HepG2 (cell line): ENCODE measurements at regions of chr6 and their contacts with region 1.

Region 1: GRCh38 chr6:32952817-32953739 is at the start of gene HLA-DMA:
- DNase-seq: peak; percentile 85
- ATAC-seq: peak; percentile 92
- H3K4me3 ChIP-seq: no peak within 1 kb of the TSS
- H3K27ac ChIP-seq: no peak within 1 kb of the TSS
- H3K4me1 ChIP-seq: peaks cover 12% of the 10 kb centered on the region
- H3K27me3 ChIP-seq: peaks cover 1 to 13% of the 10 kb centered on the region in 2 experiments; a peak in 2 of 5 replicates
- CTCF ChIP-seq: peak; percentile 82
- EP300 ChIP-seq: no peak
- POLR2A ChIP-seq: no peak
- RAD21 ChIP-seq: peak; percentile 62
- total RNA-seq, gene HLA-DMA: 0.71 and 1.3 TPM in 2 replicates

Region 2: GRCh38 chr6:32785781-32786533 is 167.1 kb before region 1 on chr6:
- CTCF ChIA-PET with region 1: no interaction called
- POLR2A ChIA-PET with region 1: no interaction called
- in situ Hi-C with region 1: no loop called
- intact Hi-C with region 1: no loop called
- DNase-seq: peak; percentile 44
- ATAC-seq: peak; percentile 86
- H3K4me3 ChIP-seq: no peak overlapping the region
- H3K27ac ChIP-seq: no peak overlapping the region
- H3K4me1 ChIP-seq: peaks cover 7% of the 10 kb centered on the region; the same call in 1 of the 2 replicates
- H3K27me3 ChIP-seq: no peaks in the 10 kb centered on the region; a peak in 1 of 5 replicates
- CTCF ChIP-seq: peak; percentile 80
- EP300 ChIP-seq: no peak
- POLR2A ChIP-seq: no peak
- RAD21 ChIP-seq: peak; percentile 39; the same call in 1 of the 2 replicates

Region 3: GRCh38 chr6:32838114-32838958 is 114.7 kb before region 1 on chr6 and contains the start of gene TAP2:
- CTCF ChIA-PET with region 1: no interaction called
- POLR2A ChIA-PET with region 1: interaction called, 4 read pairs
- in situ Hi-C with region 1: no loop called
- intact Hi-C with region 1: loop called (anchors 1 kb)
- DNase-seq: peak; percentile 89
- ATAC-seq: peak; percentile 97
- H3K4me3 ChIP-seq: peak within 1 kb of the TSS; percentile 82 to 87 (median 86)
- H3K27ac ChIP-seq: peak within 1 kb of the TSS; percentile 80
- H3K4me1 ChIP-seq: peaks cover 24% of the 10 kb centered on the region
- H3K27me3 ChIP-seq: no peaks in the 10 kb centered on the region
- CTCF ChIP-seq: peak; percentile 99
- EP300 ChIP-seq: no peak
- POLR2A ChIP-seq: peak; percentile 60 to 73
- RAD21 ChIP-seq: peak; percentile 99
- total RNA-seq, gene TAP2: 9.8 and 17.6 TPM in 2 replicates

Region 4: GRCh38 chr6:32885698-32886286 is 67.3 kb before region 1 on chr6:
- CTCF ChIA-PET with region 1: interaction called, 31 read pairs
- POLR2A ChIA-PET with region 1: no interaction called
- in situ Hi-C with region 1: loop called (anchors 5 kb)
- intact Hi-C with region 1: no loop called
- DNase-seq: peak; percentile 77
- ATAC-seq: peak; percentile 67
- H3K4me3 ChIP-seq: no peak overlapping the region
- H3K27ac ChIP-seq: no peak overlapping the region
- H3K4me1 ChIP-seq: no peaks in the 10 kb centered on the region
- H3K27me3 ChIP-seq: peaks cover 0 to 36% of the 10 kb centered on the region in 2 experiments; a peak in 2 of 5 replicates
- CTCF ChIP-seq: peak; percentile 68
- EP300 ChIP-seq: no peak
- POLR2A ChIP-seq: no peak
- RAD21 ChIP-seq: peak; percentile 67

Region 5: DNA sequence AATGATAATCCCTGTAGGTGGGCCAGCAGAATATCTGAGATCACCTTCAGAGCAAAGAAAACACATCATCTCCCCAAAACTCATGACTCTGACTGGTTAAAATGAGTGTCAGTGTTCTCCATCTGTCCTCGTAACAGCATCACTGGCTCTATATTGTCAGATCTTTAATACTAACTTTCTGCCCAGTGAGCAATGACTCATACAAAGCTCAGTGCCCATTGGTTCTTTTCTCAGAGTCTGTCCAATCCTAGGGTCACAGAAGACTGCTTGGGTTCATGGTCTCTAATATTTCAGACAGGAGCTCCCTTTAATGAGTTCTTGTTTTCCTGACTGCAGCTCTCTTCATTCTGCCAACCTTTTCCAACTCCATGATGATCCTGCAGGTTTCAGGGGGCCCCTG is 159.1 kb after region 1 on chr6:
- CTCF ChIA-PET with region 1: no interaction called
- POLR2A ChIA-PET with region 1: no interaction called
- in situ Hi-C with region 1: no loop called
- intact Hi-C with region 1: no loop called
- DNase-seq: peak; percentile 23
- ATAC-seq: peak; percentile 79
- H3K4me3 ChIP-seq: no peak overlapping the region
- H3K27ac ChIP-seq: no peak overlapping the region
- H3K4me1 ChIP-seq: peaks cover 1% of the 10 kb centered on the region; the same call in 1 of the 2 replicates
- H3K27me3 ChIP-seq: peaks cover under 1 to 35% of the 10 kb centered on the region in 2 experiments; a peak in 4 of 5 replicates
- CTCF ChIP-seq: no peak
- EP300 ChIP-seq: no peak
- POLR2A ChIP-seq: no peak
- RAD21 ChIP-seq: no peak